ENCODE measurements at regions of chr2 and their contacts with region 1.

Region 1: DNA sequence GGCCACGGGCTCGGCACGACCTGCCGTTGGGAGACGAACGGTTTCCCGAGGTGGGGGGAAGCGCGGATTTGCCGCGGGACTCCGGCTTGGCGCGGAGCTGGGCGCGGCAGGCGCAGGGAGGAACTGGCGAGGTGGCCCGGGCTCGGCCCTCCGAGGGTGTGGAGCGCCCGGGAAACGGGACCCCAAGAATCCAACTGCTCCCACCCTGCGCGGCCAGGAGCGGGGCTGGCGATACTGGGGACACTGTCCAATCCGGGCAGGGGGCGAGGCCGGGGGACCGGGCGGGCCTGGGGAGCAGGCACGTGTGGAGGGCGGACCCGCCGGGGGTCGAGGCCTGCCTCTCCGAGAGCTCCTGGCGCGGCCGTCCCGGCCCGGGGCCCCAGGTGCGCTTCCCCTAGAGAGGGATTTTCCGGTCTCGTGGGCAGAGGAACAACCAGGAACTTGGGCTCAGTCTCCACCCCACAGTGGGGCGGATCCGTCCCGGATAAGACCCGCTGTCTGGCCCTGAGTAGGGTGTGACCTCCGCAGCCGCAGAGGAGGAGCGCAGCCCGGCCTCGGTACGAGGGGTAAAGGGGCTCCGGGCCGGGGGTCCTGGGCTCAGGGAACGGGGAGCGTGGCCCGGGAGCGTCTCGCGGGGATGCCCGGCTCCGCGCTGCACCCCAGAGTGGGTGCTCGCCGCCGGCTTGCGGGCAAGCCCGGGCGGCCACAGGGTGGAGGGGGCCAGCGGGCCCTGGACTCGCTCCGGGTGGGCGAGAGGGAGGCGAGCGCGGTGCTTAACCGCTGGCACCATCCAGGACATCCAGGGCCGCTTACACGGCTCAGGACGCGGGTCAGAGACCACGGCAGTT is at the start of gene ANXA4:
- DNase-seq: peak in 1 of 2 donors; percentile 94
- H3K4me3 ChIP-seq: peak within 1 kb of the TSS; percentile 73 to 100
- H3K27ac ChIP-seq: peak within 1 kb of the TSS; percentile 99
- H3K4me1 ChIP-seq: peaks cover 44% of the 10 kb centered on the region
- H3K27me3 ChIP-seq: no peaks in the 10 kb centered on the region
- CTCF ChIP-seq: no peak
- POLR2A ChIP-seq: peak; percentile 9 to 88
- total RNA-seq, gene ANXA4: 63.6 TPM

Region 2: DNA sequence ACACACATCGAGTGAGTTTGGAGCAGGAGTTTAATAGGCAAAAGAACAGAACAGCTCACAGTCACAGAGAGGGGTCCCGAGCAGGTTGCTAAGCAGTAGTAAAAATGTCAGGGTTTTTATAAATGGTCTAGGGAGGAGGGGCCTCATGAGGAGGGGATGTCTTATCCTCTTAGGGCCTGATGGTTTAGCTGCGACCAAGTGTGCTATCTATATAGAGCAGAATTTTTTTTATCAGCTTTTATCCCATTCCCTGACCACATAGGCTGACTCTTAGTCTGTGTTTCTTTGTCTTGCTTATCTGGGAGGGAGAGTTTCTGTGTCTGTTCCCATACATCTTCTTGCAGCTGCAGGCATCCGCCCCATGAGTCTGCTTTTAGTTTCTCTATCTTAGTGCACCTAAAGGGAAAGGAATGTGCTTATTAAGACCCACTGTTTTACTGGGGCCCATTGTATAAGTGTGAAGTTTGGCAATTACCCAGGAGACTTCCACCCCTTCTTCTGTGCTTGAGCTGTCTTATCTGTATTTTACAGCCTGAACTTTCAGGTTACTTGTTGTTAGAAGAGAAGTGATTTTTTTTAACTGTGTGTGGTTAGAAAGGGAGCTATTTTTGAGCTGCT is 57.2 kb after region 1 on chr2:
- intact Hi-C with region 1: loop called (anchors 10 kb)
- DNase-seq: no peak
- H3K4me3 ChIP-seq: peak overlapping the region; percentile 35 to 40
- H3K27ac ChIP-seq: peak overlapping the region; percentile 77
- H3K4me1 ChIP-seq: peaks cover 25% of the 10 kb centered on the region
- H3K27me3 ChIP-seq: no peaks in the 10 kb centered on the region
- CTCF ChIP-seq: no peak
- POLR2A ChIP-seq: no peak